ENCODE measurements at regions of chr11 and their contacts with region 1.

Region 1: GRCh38 chr11:81644239-81644840 is 1089.3 kb downstream of the FAM181B start:
- DNase-seq: peak; percentile 58
- H3K4me3 Mint-ChIP-seq: no peak overlapping the region
- H3K27ac Mint-ChIP-seq: no peak overlapping the region
- H3K4me1 Mint-ChIP-seq: no peaks in the 10 kb centered on the region
- H3K27me3 Mint-ChIP-seq: peaks cover 66% of the 10 kb centered on the region
- CTCF ChIP-seq: peak; percentile 59

Region 2: DNA sequence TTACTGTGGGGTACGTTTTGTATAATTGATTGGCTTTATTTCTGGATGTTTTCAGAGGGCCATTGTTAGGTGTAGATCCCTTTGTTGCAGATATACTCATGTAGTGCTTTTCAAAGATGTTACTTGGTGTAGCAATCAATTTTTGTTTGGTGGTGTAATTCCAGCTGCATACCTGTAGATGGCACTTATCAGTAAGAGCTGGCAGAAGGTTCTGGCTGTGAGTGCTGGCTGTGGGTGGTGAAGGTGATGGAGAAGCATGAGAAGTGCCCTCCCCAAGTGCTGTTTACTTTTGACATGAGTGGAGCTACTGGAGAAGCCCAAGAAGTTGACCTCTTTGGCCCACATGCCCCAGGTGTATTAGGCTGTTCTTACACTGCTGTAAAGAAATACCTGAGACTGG is 14.4 kb after region 1 on chr11:
- CTCF ChIA-PET with region 1: interaction called, 10 read pairs
- POLR2A ChIA-PET with region 1: no interaction called
- intact Hi-C with region 1: no loop called
- DNase-seq: peak; percentile 27
- H3K4me3 Mint-ChIP-seq: no peak overlapping the region
- H3K27ac Mint-ChIP-seq: no peak overlapping the region
- H3K4me1 Mint-ChIP-seq: no peaks in the 10 kb centered on the region
- H3K27me3 Mint-ChIP-seq: peaks cover 83% of the 10 kb centered on the region
- CTCF ChIP-seq: peak; percentile 67

Region 3: DNA sequence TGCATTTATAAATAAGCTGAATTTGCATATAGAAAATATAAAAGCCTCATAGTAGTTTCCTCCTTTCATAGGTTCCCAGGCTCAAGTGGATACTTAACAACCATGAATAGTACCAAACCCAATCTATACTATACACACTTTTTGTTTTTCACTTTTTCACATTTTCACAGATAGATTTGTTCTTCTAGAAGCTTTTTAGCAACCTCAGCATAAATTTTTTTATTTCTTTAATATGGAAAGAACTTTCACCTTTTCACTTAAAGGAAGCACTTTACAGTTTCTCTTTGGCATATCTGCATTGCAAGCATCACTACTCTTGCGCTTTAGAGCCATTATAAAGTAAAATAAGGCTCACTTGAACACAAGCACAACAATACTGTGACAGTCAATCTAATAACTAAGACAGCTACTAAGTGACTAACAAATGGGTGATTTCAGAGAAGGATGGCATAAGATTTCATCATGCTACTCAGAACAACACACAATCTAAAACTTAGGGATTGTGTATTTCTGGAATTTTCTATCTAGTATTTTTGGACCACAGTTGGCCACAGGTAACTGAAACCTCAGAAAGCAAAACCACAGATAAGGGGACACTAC is 25.7 kb after region 1 on chr11:
- CTCF ChIA-PET with region 1: interaction called, 10 read pairs
- POLR2A ChIA-PET with region 1: no interaction called
- intact Hi-C with region 1: no loop called
- DNase-seq: no peak
- H3K4me3 Mint-ChIP-seq: no peak overlapping the region
- H3K27ac Mint-ChIP-seq: no peak overlapping the region
- H3K4me1 Mint-ChIP-seq: no peaks in the 10 kb centered on the region
- H3K27me3 Mint-ChIP-seq: peaks cover 23% of the 10 kb centered on the region
- CTCF ChIP-seq: no peak

Region 4: DNA sequence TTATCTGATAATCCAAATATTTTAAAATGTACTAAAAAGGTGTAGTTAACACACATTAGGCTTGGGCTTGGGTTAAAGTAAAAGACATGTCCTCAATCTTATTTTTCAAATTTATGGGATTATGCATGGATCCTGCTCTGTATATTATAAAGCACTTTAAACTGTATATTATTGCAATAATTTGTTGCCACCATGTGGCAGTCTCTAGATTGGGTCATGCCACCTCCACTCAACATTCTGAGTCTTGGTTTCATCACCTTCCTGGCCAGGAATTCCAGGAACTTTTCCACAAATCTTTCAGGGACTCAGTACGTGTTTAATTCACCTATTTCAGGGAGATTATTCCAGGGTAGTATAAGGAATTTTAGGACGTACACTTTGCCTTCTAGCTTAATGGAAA is 393.8 kb after region 1 on chr11:
- CTCF ChIA-PET with region 1: no interaction called
- POLR2A ChIA-PET with region 1: no interaction called
- intact Hi-C with region 1: loop called (anchors 1 kb)
- DNase-seq: peak; percentile 5
- H3K4me3 Mint-ChIP-seq: no peak overlapping the region
- H3K27ac Mint-ChIP-seq: no peak overlapping the region
- H3K4me1 Mint-ChIP-seq: no peaks in the 10 kb centered on the region
- H3K27me3 Mint-ChIP-seq: peaks cover 48% of the 10 kb centered on the region
- CTCF ChIP-seq: no peak

Region 5: DNA sequence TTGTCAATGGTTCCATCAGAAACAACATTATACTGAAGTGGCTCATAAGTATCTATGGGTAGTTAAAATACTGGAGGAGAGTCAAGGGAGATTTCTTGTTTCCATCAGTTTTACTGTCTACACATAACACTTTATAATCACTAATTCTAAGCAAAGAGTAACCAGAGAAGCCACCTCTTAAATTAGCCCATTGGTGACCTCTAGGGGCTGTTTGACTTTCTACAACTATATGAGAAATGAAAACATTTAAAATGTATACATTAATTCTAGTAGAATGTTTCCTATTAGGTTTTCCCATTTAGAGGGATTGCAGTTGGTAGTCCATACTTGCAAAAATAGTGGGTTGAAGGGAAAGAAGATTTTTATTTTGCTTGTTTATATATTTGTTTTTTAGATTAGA is 585.0 kb after region 1 on chr11:
- CTCF ChIA-PET with region 1: interaction called, 48 read pairs
- POLR2A ChIA-PET with region 1: no interaction called
- intact Hi-C with region 1: loop called (anchors 1 kb)
- DNase-seq: peak; percentile 47
- H3K4me3 Mint-ChIP-seq: no peak overlapping the region
- H3K27ac Mint-ChIP-seq: no peak overlapping the region
- H3K4me1 Mint-ChIP-seq: no peaks in the 10 kb centered on the region
- H3K27me3 Mint-ChIP-seq: peaks cover 52% of the 10 kb centered on the region
- CTCF ChIP-seq: peak; percentile 41

Measured in MCF 10A (cell line).